GM12878 (cell line): ENCODE measurements at regions of chr6 and their contacts with region 1.

Region 1: DNA sequence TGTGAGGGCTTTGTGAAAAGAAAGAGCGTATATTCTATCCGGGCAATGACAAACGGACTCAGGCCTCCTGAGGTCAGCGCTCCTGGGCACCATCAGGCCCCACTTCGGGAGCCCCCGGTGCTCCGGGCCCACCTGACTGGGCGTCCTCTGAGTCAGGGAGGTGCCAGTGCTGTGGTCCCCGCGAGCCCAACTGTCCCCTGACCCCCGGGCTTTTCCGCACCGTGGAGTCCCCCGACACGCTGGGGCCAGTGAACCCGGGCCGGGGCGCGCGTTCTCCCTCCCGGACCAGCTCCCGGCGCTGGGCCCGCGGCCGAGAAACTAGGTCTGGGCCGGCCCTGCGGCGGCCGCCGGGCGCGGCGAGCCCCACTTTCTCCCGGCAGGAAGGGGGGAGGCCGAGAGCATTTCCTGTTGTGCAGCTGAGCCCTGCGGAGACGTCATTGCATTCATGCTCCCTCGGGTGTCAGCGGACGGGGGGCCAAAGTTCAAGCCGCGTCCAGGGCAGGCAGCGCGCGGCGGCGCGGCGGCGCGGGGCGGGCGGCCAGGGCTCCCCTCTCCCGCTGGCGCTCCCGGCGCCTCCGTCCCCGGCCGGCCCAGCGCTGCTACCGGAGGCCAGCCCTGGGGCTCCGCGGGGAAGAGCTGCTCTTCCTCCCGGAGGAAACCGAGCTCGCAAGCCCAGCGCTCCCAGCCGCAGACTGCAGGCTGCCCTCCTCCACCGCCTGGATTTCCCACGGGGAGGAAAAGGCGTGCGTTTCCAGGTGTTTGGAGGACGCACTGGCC is 18.3 kb downstream of the HIVEP2 start:
- DNase-seq: no peak
- ATAC-seq: peak; percentile 80
- H3K4me3 ChIP-seq: peak overlapping the region; percentile 88
- H3K27ac ChIP-seq: peak overlapping the region; percentile 97
- H3K4me1 ChIP-seq: peaks cover 8% of the 10 kb centered on the region
- H3K27me3 ChIP-seq: no peaks in the 10 kb centered on the region
- CTCF ChIP-seq: no peak
- EP300 ChIP-seq: peak; percentile 64 to 66; a peak in 2 of 4 replicates
- POLR2A ChIP-seq: peak; percentile 86
- RAD21 ChIP-seq: no peak

Region 2: GRCh38 chr6:142752348-142752747 is 174.3 kb before region 1 on chr6:
- CTCF ChIA-PET with region 1: no interaction called
- POLR2A ChIA-PET with region 1: no interaction called
- RAD21 ChIA-PET with region 1: no interaction called
- SMC1A ChIA-PET with region 1: no interaction called
- in situ Hi-C with region 1: no loop called
- intact Hi-C with region 1: no loop called
- DNase-seq: no peak
- ATAC-seq: no peak
- H3K4me3 ChIP-seq: no peak overlapping the region
- H3K27ac ChIP-seq: no peak overlapping the region
- H3K4me1 ChIP-seq: no peaks in the 10 kb centered on the region
- H3K27me3 ChIP-seq: no peaks in the 10 kb centered on the region
- CTCF ChIP-seq: no peak
- EP300 ChIP-seq: no peak
- POLR2A ChIP-seq: no peak
- RAD21 ChIP-seq: no peak

Region 3: DNA sequence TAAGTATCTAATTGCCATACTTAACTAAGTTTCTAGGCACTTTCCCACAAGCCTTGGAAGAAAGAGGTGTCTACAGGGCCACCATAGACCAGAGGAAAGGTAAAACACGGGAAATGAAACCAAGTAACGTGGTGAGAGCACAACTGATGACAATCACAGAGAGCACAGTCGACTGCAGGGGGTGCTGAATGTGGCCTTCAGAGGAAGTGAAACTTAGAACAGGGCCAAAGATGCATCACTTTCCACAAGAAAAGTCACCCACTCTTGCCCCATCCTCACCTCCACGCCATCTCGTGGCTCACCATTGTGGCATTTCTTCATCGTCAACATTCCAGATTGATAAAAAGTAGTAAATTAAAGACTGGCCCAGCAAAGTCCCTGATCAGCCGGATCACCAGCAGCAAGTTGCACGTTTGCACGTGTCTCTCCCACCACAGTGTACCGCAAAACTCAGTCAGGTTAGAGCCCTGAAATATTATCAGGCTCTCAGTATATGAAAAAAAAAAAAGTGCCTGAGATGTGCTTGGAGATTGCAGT is 13.1 kb before region 1 on chr6:
- CTCF ChIA-PET with region 1: interaction called, 4 read pairs
- POLR2A ChIA-PET with region 1: interaction called, 17 read pairs
- RAD21 ChIA-PET with region 1: interaction called, 21 read pairs
- SMC1A ChIA-PET with region 1: interaction called, 71 read pairs
- in situ Hi-C with region 1: no loop called
- intact Hi-C with region 1: loop called (anchors 1 kb)
- DNase-seq: peak; percentile 94
- ATAC-seq: peak; percentile 89
- H3K4me3 ChIP-seq: peak overlapping the region; percentile 27
- H3K27ac ChIP-seq: peak overlapping the region; percentile 95
- H3K4me1 ChIP-seq: peaks cover 32% of the 10 kb centered on the region
- H3K27me3 ChIP-seq: no peaks in the 10 kb centered on the region
- CTCF ChIP-seq: peak; percentile 11 to 27 (median 26); a peak in 3 of 6 replicates
- EP300 ChIP-seq: peak; percentile 72 to 97; a peak in 3 of 4 replicates
- POLR2A ChIP-seq: peak; percentile 43; the same call in 1 of the 2 replicates
- RAD21 ChIP-seq: peak; percentile 53